Naive thymus-derived CD4-positive, alpha-beta T cell (primary cell): ENCODE measurements at regions of chr6 and their contacts with region 1.

Region 1: DNA sequence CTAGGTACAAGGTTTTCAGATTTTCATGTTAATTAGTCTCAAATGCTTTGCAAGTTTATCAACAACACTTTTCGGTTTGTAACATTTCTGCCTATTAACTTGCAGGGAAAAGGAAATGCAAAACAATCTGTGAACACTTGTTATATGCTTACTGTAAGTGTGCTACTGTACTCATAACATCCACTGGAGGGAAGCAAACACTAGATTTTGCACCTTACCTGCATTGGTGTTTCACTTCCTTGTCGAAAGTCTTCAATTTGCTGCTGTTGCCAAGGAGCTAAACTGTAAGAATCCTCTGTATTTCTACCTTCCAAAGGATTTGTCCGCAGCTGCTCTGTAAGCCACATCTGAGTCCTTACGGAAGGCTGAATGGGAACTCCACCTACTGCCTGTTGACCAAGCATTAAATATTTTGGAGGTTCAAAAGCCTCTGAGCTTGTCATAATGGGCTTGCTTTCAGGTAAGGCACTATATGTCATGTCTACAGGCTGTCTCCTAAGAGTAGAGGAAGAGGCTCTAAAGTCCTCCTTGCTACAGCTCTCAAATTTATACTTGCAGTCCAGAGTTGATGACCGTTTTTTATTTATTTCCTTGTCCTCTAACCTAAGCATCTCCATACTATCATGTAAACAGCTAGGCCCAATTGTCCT is 17.3 kb downstream of the PLN start:
- DNase-seq: peak in 7 of 9 donors; percentile 55 to 77 (median 63)
- ATAC-seq: peak; percentile 94
- H3K4me3 ChIP-seq: no peak overlapping the region
- H3K4me3 Mint-ChIP-seq: no peak overlapping the region
- H3K27ac ChIP-seq: peak overlapping the region; percentile 34
- H3K27ac Mint-ChIP-seq: peak overlapping the region; percentile 16 to 90 (median 61)
- H3K4me1 ChIP-seq: no peaks in the 10 kb centered on the region
- H3K4me1 Mint-ChIP-seq: peaks cover 7 to 60% (median 42%) of the 10 kb centered on the region in 7 donors
- H3K27me3 ChIP-seq: no peaks in the 10 kb centered on the region
- H3K27me3 Mint-ChIP-seq: no peaks in the 10 kb centered on the region

Region 2: GRCh38 chr6:118580585-118581419 is 15.4 kb after region 1 on chr6:
- CTCF ChIA-PET with region 1: interaction called, 4 read pairs
- POLR2A ChIA-PET with region 1: interaction called, 3 read pairs
- intact Hi-C with region 1: loop called in 1 of 2 experiments (anchors 2 kb)
- DNase-seq: peak in 5 of 9 donors; percentile 11 to 37 (median 16)
- ATAC-seq: peak; percentile 78
- H3K4me3 ChIP-seq: no peak overlapping the region
- H3K4me3 Mint-ChIP-seq: peak overlapping the region in 2 of 10 donors; percentile 7 to 64
- H3K27ac ChIP-seq: no peak overlapping the region
- H3K27ac Mint-ChIP-seq: peak overlapping the region in 7 of 9 donors; percentile 60 to 92 (median 85)
- H3K4me1 ChIP-seq: no peaks in the 10 kb centered on the region
- H3K4me1 Mint-ChIP-seq: peaks cover 0 to 31% (median 13%) of the 10 kb centered on the region in 7 donors
- H3K27me3 ChIP-seq: no peaks in the 10 kb centered on the region
- H3K27me3 Mint-ChIP-seq: no peaks in the 10 kb centered on the region

Region 3: DNA sequence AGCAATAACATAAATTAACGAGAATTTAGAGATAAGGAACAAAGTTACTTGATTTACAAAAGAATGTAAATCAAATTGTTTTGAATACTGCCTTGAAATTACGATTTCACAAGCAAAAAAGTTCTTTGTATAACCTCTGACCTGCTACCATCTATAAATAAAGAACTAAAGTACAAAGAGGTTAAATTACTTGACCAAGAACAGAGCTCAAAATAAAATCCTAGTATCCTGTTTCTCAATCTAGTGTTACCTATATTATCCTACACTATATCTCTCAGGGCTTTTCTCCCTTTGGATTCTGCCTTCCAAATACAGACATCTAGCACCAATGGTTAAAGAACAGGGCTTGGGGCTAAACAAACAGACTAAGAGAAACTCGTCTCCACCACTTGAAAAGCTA is 26.5 kb after region 1 on chr6:
- CTCF ChIA-PET with region 1: no interaction called
- POLR2A ChIA-PET with region 1: no interaction called
- intact Hi-C with region 1: no loop called
- DNase-seq: no peak
- ATAC-seq: no peak
- H3K4me3 ChIP-seq: no peak overlapping the region
- H3K4me3 Mint-ChIP-seq: no peak overlapping the region
- H3K27ac ChIP-seq: no peak overlapping the region
- H3K27ac Mint-ChIP-seq: peak overlapping the region in 2 of 9 donors; percentile 53 to 65
- H3K4me1 ChIP-seq: no peaks in the 10 kb centered on the region
- H3K4me1 Mint-ChIP-seq: peaks cover 12 to 89% (median 69%) of the 10 kb centered on the region in 7 donors
- H3K27me3 ChIP-seq: no peaks in the 10 kb centered on the region
- H3K27me3 Mint-ChIP-seq: no peaks in the 10 kb centered on the region

Region 4: GRCh38 chr6:118668761-118669385 is 103.4 kb after region 1 on chr6:
- CTCF ChIA-PET with region 1: interaction called, 5 read pairs
- POLR2A ChIA-PET with region 1: no interaction called
- intact Hi-C with region 1: loop called in 1 of 2 experiments (anchors 5 kb)
- DNase-seq: no peak
- ATAC-seq: no peak
- H3K4me3 ChIP-seq: no peak overlapping the region
- H3K4me3 Mint-ChIP-seq: peak overlapping the region in 3 of 10 donors; percentile 7 to 28 (median 19)
- H3K27ac ChIP-seq: peak overlapping the region; percentile 20
- H3K27ac Mint-ChIP-seq: peak overlapping the region in 8 of 9 donors; percentile 5 to 93 (median 86)
- H3K4me1 ChIP-seq: peaks cover 4 to 28% of the 10 kb centered on the region in 2 donors
- H3K4me1 Mint-ChIP-seq: peaks cover 36 to 94% (median 87%) of the 10 kb centered on the region in 7 donors
- H3K27me3 ChIP-seq: no peaks in the 10 kb centered on the region
- H3K27me3 Mint-ChIP-seq: no peaks in the 10 kb centered on the region

Region 5: DNA sequence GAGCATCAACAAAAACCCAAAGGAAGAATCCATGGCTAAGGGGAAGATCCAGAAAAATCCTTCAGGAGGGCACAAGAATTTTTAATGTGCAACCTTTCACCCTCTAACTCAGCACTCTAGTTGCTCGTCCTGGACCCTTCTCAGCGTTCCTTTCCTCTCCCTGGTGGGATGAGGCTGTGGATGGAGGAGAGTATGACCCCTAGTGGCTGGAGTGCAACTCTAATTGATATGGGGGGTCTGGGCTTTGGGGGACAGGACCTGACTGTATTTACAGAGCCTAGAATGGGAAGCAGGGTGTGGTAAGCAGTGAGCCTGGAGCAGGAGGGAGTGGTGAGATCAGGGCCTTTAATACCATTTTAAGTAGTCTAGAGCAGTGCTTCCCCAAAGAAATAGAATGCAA is 169.9 kb after region 1 on chr6:
- CTCF ChIA-PET with region 1: interaction called, 3 read pairs
- POLR2A ChIA-PET with region 1: interaction called, 4 read pairs
- intact Hi-C with region 1: loop called in 1 of 2 experiments (anchors 1 kb)
- DNase-seq: no peak
- ATAC-seq: peak; percentile 45
- H3K4me3 ChIP-seq: no peak overlapping the region
- H3K4me3 Mint-ChIP-seq: peak overlapping the region in 2 of 10 donors; percentile 10 to 15
- H3K27ac ChIP-seq: no peak overlapping the region
- H3K27ac Mint-ChIP-seq: peak overlapping the region in 3 of 9 donors; percentile 49 to 73 (median 51)
- H3K4me1 ChIP-seq: no peaks in the 10 kb centered on the region
- H3K4me1 Mint-ChIP-seq: peaks cover 10 to 35% (median 23%) of the 10 kb centered on the region in 7 donors
- H3K27me3 ChIP-seq: no peaks in the 10 kb centered on the region
- H3K27me3 Mint-ChIP-seq: no peaks in the 10 kb centered on the region

Region 6: GRCh38 chr6:118934461-118935330 is 369.3 kb after region 1 on chr6 and contains the start of gene MCM9:
- CTCF ChIA-PET with region 1: interaction called, 3 read pairs
- POLR2A ChIA-PET with region 1: interaction called, 3 read pairs
- intact Hi-C with region 1: loop called (anchors 10 kb)
- DNase-seq: peak; percentile 77 to 93 (median 86)
- ATAC-seq: peak; percentile 92
- H3K4me3 ChIP-seq: peak within 1 kb of the TSS; percentile 98
- H3K4me3 Mint-ChIP-seq: peak within 1 kb of the TSS; percentile 86 to 96 (median 91)
- H3K27ac ChIP-seq: peak within 1 kb of the TSS; percentile 95
- H3K27ac Mint-ChIP-seq: peak within 1 kb of the TSS; percentile 86 to 95 (median 93)
- H3K4me1 ChIP-seq: peaks cover 4 to 8% of the 10 kb centered on the region in 2 donors
- H3K4me1 Mint-ChIP-seq: peaks cover 22 to 47% (median 41%) of the 10 kb centered on the region in 7 donors
- H3K27me3 ChIP-seq: no peaks in the 10 kb centered on the region
- H3K27me3 Mint-ChIP-seq: no peaks in the 10 kb centered on the region
- total RNA-seq, gene MCM9: 21.8 to 33.7 (median 31.1) TPM

Region 7: GRCh38 chr6:118952683-118953082 is 387.2 kb after region 1 on chr6:
- CTCF ChIA-PET with region 1: no interaction called
- POLR2A ChIA-PET with region 1: no interaction called
- intact Hi-C with region 1: no loop called
- DNase-seq: no peak
- ATAC-seq: no peak
- H3K4me3 ChIP-seq: no peak overlapping the region
- H3K4me3 Mint-ChIP-seq: no peak overlapping the region
- H3K27ac ChIP-seq: no peak overlapping the region
- H3K27ac Mint-ChIP-seq: no peak overlapping the region
- H3K4me1 ChIP-seq: no peaks in the 10 kb centered on the region
- H3K4me1 Mint-ChIP-seq: peaks cover 0 to 1% (median 0%) of the 10 kb centered on the region in 7 donors
- H3K27me3 ChIP-seq: no peaks in the 10 kb centered on the region
- H3K27me3 Mint-ChIP-seq: peaks cover 0 to 18% (median 0%) of the 10 kb centered on the region in 5 donors

Region 8: DNA sequence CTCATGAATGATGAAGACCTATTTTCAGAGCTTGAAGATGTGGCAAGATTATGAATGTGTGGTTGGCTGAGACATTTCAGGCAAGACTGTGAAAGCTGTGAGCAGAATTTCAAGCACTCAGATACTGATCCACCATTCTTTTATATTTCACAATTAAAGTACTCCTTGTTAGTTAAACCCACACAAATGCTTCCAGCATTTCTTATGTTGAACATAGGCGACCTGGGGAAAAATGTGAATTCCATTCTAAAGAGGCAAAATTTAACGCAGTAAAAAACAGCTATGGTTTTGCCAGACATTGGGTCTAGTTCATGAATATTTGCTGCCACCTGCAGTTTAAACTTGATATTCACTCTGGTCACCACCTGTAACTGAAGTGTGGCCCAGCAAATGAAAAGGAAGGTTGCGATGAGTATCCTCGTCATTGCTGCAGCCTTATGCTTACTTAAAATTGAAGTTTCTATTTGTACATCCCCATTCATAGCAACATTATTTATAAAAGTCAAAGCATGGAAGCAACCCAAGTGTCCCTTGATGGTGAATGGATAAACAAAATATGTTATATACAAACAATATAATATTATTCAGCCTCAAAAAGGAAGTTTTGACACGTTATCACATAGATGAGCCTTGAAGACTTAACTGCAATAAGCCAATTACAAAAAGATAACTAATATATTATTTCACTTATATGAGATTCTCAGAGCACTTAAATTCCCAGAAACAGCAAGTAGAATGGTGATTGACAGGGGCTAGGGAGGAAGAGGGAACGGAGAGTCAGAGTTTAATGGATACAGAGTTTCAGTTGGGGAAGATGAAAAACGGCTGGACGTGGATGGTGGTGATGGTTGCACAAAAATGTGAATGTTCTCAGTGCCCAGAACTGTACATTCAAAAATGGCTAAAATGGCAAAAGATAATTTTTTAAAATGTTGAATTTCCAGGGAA is 545.4 kb after region 1 on chr6:
- CTCF ChIA-PET with region 1: interaction called, 27 read pairs
- POLR2A ChIA-PET with region 1: no interaction called
- intact Hi-C with region 1: loop called (anchors 1 kb)
- DNase-seq: peak in 7 of 9 donors; percentile 47 to 76 (median 73)
- ATAC-seq: peak; percentile 85
- H3K4me3 ChIP-seq: no peak overlapping the region
- H3K4me3 Mint-ChIP-seq: peak overlapping the region in 4 of 10 donors; percentile 34 to 61 (median 52)
- H3K27ac ChIP-seq: no peak overlapping the region
- H3K27ac Mint-ChIP-seq: peak overlapping the region in 1 of 9 donors; percentile 21
- H3K4me1 ChIP-seq: peaks cover 0 to 8% of the 10 kb centered on the region in 2 donors
- H3K4me1 Mint-ChIP-seq: peaks cover 2 to 22% (median 13%) of the 10 kb centered on the region in 7 donors
- H3K27me3 ChIP-seq: no peaks in the 10 kb centered on the region
- H3K27me3 Mint-ChIP-seq: peaks cover 0 to 4% (median 0%) of the 10 kb centered on the region in 5 donors